MCF 10A (cell line): ENCODE measurements at regions of chr10 and their contacts with region 1.

Region 1: GRCh38 chr10:69506834-69507721 is 55.8 kb downstream of the TSPAN15 start:
- DNase-seq: no peak
- H3K4me3 Mint-ChIP-seq: peak overlapping the region; percentile 64
- H3K27ac Mint-ChIP-seq: no peak overlapping the region
- H3K4me1 Mint-ChIP-seq: peaks cover 7% of the 10 kb centered on the region
- H3K27me3 Mint-ChIP-seq: peaks cover 19% of the 10 kb centered on the region
- CTCF ChIP-seq: no peak

Region 2: GRCh38 chr10:69408318-69409175 is 98.5 kb before region 1 on chr10:
- CTCF ChIA-PET with region 1: interaction called, 15 read pairs
- POLR2A ChIA-PET with region 1: interaction called, 4 read pairs
- intact Hi-C with region 1: loop called (anchors 1 kb)
- DNase-seq: peak; percentile 93
- H3K4me3 Mint-ChIP-seq: peak overlapping the region; percentile 65
- H3K27ac Mint-ChIP-seq: peak overlapping the region; percentile 40
- H3K4me1 Mint-ChIP-seq: peaks cover 16% of the 10 kb centered on the region
- H3K27me3 Mint-ChIP-seq: no peaks in the 10 kb centered on the region
- CTCF ChIP-seq: peak; percentile 76

Region 3: GRCh38 chr10:69425511-69426298 is 81.4 kb before region 1 on chr10:
- CTCF ChIA-PET with region 1: interaction called, 45 read pairs
- POLR2A ChIA-PET with region 1: interaction called, 5 read pairs
- intact Hi-C with region 1: loop called (anchors 1 kb)
- DNase-seq: no peak
- H3K4me3 Mint-ChIP-seq: no peak overlapping the region
- H3K27ac Mint-ChIP-seq: no peak overlapping the region
- H3K4me1 Mint-ChIP-seq: peaks cover 12% of the 10 kb centered on the region
- H3K27me3 Mint-ChIP-seq: no peaks in the 10 kb centered on the region
- CTCF ChIP-seq: no peak

Region 4: GRCh38 chr10:69439813-69440506 is 67.1 kb before region 1 on chr10:
- CTCF ChIA-PET with region 1: interaction called, 40 read pairs
- POLR2A ChIA-PET with region 1: interaction called, 3 read pairs
- intact Hi-C with region 1: no loop called
- DNase-seq: peak; percentile 81
- H3K4me3 Mint-ChIP-seq: peak overlapping the region; percentile 64
- H3K27ac Mint-ChIP-seq: peak overlapping the region; percentile 87
- H3K4me1 Mint-ChIP-seq: peaks cover 37% of the 10 kb centered on the region
- H3K27me3 Mint-ChIP-seq: no peaks in the 10 kb centered on the region
- CTCF ChIP-seq: no peak

Region 5: GRCh38 chr10:69527961-69528360 is 20.9 kb after region 1 on chr10:
- CTCF ChIA-PET with region 1: no interaction called
- POLR2A ChIA-PET with region 1: no interaction called
- intact Hi-C with region 1: no loop called
- DNase-seq: no peak
- H3K4me3 Mint-ChIP-seq: no peak overlapping the region
- H3K27ac Mint-ChIP-seq: no peak overlapping the region
- H3K4me1 Mint-ChIP-seq: no peaks in the 10 kb centered on the region
- H3K27me3 Mint-ChIP-seq: peaks cover 21% of the 10 kb centered on the region
- CTCF ChIP-seq: no peak

Region 6: DNA sequence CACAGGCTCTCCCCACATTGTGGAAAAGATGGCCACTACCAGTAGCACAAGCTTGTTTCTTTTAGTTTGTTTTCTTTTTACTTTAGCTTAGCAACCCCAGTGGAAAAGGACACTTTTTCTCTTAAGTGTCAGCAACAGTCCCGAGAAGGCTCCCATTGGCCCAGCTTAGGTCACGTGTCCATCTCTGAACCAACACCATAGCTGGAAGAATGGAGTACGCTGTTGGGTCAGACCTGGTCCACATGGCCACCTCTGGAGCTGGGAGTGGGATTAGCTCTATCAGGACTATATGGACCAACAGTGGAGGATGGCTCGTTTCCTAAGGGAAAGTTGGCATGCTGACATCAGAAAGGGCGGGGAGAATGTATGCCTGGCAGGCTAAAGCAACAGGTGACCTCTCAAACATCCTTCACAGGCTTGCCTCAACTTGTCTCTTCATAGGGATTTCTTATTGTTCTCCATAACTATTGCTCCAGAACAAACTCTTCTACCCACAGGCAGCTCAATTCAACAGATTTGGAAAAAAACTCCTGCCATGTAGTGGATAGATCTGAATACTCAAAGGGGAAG is 93.8 kb after region 1 on chr10:
- CTCF ChIA-PET with region 1: no interaction called
- POLR2A ChIA-PET with region 1: no interaction called
- intact Hi-C with region 1: no loop called
- DNase-seq: peak; percentile 13
- H3K4me3 Mint-ChIP-seq: no peak overlapping the region
- H3K27ac Mint-ChIP-seq: no peak overlapping the region
- H3K4me1 Mint-ChIP-seq: peaks cover 7% of the 10 kb centered on the region
- H3K27me3 Mint-ChIP-seq: peaks cover 72% of the 10 kb centered on the region
- CTCF ChIP-seq: no peak

Region 7: GRCh38 chr10:69794673-69795072 is 287.6 kb after region 1 on chr10:
- CTCF ChIA-PET with region 1: no interaction called
- POLR2A ChIA-PET with region 1: no interaction called
- intact Hi-C with region 1: no loop called
- DNase-seq: no peak
- H3K4me3 Mint-ChIP-seq: no peak overlapping the region
- H3K27ac Mint-ChIP-seq: no peak overlapping the region
- H3K4me1 Mint-ChIP-seq: peaks cover 12% of the 10 kb centered on the region
- H3K27me3 Mint-ChIP-seq: peaks cover 22% of the 10 kb centered on the region
- CTCF ChIP-seq: no peak